GM12878 (cell line): ENCODE measurements at regions of chr12 and their contacts with region 1.

Region 1: DNA sequence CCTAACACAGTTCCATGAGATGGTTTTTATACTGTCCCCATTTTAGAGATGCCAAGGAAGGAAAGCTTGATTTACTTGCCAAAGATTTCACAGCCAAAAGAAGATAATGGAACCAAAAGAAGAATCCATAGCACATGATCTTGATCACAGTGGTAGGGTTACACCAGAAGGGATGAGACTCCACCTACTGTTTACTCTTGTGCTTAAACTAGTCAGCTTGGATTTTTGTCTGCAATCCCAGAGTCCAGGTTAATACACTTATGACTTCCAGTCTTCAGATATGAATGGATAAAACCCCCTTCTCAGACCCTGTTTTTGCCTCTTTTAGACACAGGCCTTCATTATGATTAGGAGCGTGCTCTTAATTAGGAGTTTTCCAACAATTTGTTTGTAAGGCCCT is 454.2 kb downstream of the AEBP2 start:
- DNase-seq: no peak
- ATAC-seq: peak; percentile 42
- H3K4me3 ChIP-seq: no peak overlapping the region
- H3K27ac ChIP-seq: no peak overlapping the region
- H3K4me1 ChIP-seq: no peaks in the 10 kb centered on the region
- H3K27me3 ChIP-seq: no peaks in the 10 kb centered on the region
- CTCF ChIP-seq: peak in 1 of 3 experiments; percentile 41; a peak in 2 of 6 replicates
- EP300 ChIP-seq: no peak
- POLR2A ChIP-seq: no peak
- RAD21 ChIP-seq: peak; percentile 51

Region 2: GRCh38 chr12:19739183-19739776 is 154.2 kb before region 1 on chr12:
- CTCF ChIA-PET with region 1: interaction called, 41 read pairs
- POLR2A ChIA-PET with region 1: no interaction called
- RAD21 ChIA-PET with region 1: interaction called, 26 read pairs
- SMC1A ChIA-PET with region 1: interaction called, 25 read pairs
- in situ Hi-C with region 1: no loop called
- intact Hi-C with region 1: loop called (anchors 5 kb)
- DNase-seq: peak; percentile 16
- ATAC-seq: peak; percentile 70
- H3K4me3 ChIP-seq: no peak overlapping the region
- H3K27ac ChIP-seq: no peak overlapping the region
- H3K4me1 ChIP-seq: no peaks in the 10 kb centered on the region
- H3K27me3 ChIP-seq: no peaks in the 10 kb centered on the region
- CTCF ChIP-seq: peak; percentile 47 to 62 (median 53)
- EP300 ChIP-seq: no peak
- POLR2A ChIP-seq: no peak
- RAD21 ChIP-seq: peak; percentile 75

Region 3: GRCh38 chr12:19757317-19757877 is 136.1 kb before region 1 on chr12:
- CTCF ChIA-PET with region 1: interaction called, 48 read pairs
- POLR2A ChIA-PET with region 1: no interaction called
- RAD21 ChIA-PET with region 1: interaction called, 37 read pairs
- SMC1A ChIA-PET with region 1: interaction called, 47 read pairs
- in situ Hi-C with region 1: no loop called
- intact Hi-C with region 1: loop called (anchors 1 kb)
- DNase-seq: peak; percentile 5
- ATAC-seq: peak; percentile 79
- H3K4me3 ChIP-seq: no peak overlapping the region
- H3K27ac ChIP-seq: no peak overlapping the region
- H3K4me1 ChIP-seq: no peaks in the 10 kb centered on the region
- H3K27me3 ChIP-seq: no peaks in the 10 kb centered on the region
- CTCF ChIP-seq: peak; percentile 46 to 65 (median 56)
- EP300 ChIP-seq: no peak
- POLR2A ChIP-seq: no peak
- RAD21 ChIP-seq: peak; percentile 82

Region 4: DNA sequence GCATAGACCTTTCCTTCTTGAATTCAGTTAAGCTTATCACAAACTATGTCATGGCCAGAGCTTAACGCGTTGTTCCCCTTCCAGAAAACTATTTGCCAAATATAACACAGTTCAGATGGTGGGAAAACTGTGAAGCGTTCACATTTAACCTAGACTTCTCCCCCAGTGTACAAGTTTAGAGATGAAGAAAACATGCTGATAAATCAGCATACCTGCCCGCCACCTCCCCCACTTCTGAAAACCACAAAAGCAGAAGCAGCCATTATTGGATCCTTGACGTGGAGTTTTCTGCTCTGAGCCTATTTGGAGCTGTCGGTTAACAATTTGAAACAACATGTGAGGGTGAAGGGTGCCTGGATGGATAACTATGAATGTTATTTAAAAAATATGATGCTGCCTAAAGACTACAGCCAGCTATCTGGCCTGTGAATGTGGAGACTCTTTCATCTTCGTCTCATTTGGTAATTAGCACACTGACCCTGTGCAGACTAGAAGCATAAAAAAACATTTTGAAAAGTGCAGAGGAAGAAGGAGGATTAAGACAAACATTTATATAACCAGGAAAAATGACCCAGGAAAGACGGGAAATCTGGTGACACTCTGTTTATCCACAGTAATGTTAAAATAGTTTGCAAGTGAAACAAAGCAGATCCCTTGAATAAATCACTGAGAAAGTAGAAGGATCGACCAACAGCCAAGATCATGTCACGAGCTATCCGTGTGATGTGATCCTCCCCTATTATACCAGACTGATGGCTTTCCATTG is 46.0 kb before region 1 on chr12:
- CTCF ChIA-PET with region 1: interaction called, 5 read pairs
- POLR2A ChIA-PET with region 1: interaction called, 4 read pairs
- RAD21 ChIA-PET with region 1: interaction called, 4 read pairs
- SMC1A ChIA-PET with region 1: interaction called, 27 read pairs
- in situ Hi-C with region 1: no loop called
- intact Hi-C with region 1: no loop called
- DNase-seq: no peak
- ATAC-seq: peak; percentile 89
- H3K4me3 ChIP-seq: no peak overlapping the region
- H3K27ac ChIP-seq: no peak overlapping the region
- H3K4me1 ChIP-seq: peaks cover 4% of the 10 kb centered on the region; the same call in 1 of the 2 replicates
- H3K27me3 ChIP-seq: no peaks in the 10 kb centered on the region
- CTCF ChIP-seq: no peak
- EP300 ChIP-seq: peak; percentile 28 to 57; a peak in 2 of 4 replicates
- POLR2A ChIP-seq: no peak
- RAD21 ChIP-seq: 0 out of 2 replicates have a peak, but pooled peaks have one; percentile 2